Mammary epithelial cell (primary cell): ENCODE measurements at regions of chr11 and their contacts with region 1.

Region 1: GRCh38 chr11:72752088-72752914 is at the start of gene ARAP1:
- DNase-seq: peak; percentile 57
- H3K4me3 ChIP-seq: peak within 1 kb of the TSS; percentile 66 to 75 (median 72)
- H3K27ac ChIP-seq: no peak within 1 kb of the TSS
- H3K4me1 ChIP-seq: peaks cover 12% of the 10 kb centered on the region
- H3K27me3 ChIP-seq: no peaks in the 10 kb centered on the region
- CTCF ChIP-seq: no peak
- total RNA-seq, gene ARAP1: 56.8 to 78.3 TPM

Region 2: GRCh38 chr11:72693271-72693968 is 58.9 kb before region 1 on chr11:
- CTCF ChIA-PET with region 1: no interaction called
- dilution Hi-C with region 1: loop called (anchors 5 kb)
- in situ Hi-C with region 1: no loop called
- intact Hi-C with region 1: no loop called
- DNase-seq: no peak
- H3K4me3 ChIP-seq: no peak overlapping the region
- H3K27ac ChIP-seq: no peak overlapping the region
- H3K4me1 ChIP-seq: no peaks in the 10 kb centered on the region
- H3K27me3 ChIP-seq: no peaks in the 10 kb centered on the region
- CTCF ChIP-seq: no peak

Region 3: GRCh38 chr11:72924568-72925190 is 172.4 kb after region 1 on chr11:
- CTCF ChIA-PET with region 1: no interaction called
- dilution Hi-C with region 1: no loop called
- in situ Hi-C with region 1: no loop called
- intact Hi-C with region 1: no loop called
- DNase-seq: peak; percentile 21
- H3K4me3 ChIP-seq: no peak overlapping the region
- H3K27ac ChIP-seq: no peak overlapping the region
- H3K4me1 ChIP-seq: no peaks in the 10 kb centered on the region
- H3K27me3 ChIP-seq: no peaks in the 10 kb centered on the region
- CTCF ChIP-seq: peak; percentile 64 to 67